Naive thymus-derived CD4-positive, alpha-beta T cell (primary cell): ENCODE measurements at regions of chr18 and their contacts with region 1.

Region 1: DNA sequence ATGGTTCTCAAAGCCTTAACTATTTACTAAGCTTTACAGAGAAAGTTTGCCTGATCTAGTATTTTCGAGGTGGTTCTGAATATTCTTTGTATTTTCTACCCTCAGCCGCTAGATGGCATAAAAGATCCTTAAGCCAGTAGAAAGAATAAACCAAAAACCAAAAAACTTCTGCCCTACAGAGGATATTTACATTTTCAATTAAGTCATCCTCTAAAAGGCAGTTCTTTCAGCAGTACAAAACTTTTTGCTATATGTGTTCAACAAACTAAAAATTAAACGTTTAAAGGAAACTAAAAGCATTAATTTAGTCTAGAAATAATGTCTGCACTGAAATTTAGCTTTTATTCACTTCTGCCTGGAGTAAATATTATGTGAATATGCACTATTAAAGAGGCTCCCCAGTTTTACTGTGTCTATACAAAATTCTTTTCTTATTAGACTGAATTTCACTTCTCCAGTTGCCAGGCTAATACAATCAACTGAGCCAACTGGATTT is 297.5 kb downstream of the PIEZO2 start:
- DNase-seq: peak in 5 of 9 donors; percentile 4 to 22 (median 11)
- ATAC-seq: no peak
- H3K4me3 ChIP-seq: no peak overlapping the region
- H3K4me3 Mint-ChIP-seq: no peak overlapping the region
- H3K27ac ChIP-seq: no peak overlapping the region
- H3K27ac Mint-ChIP-seq: no peak overlapping the region
- H3K4me1 ChIP-seq: no peaks in the 10 kb centered on the region
- H3K4me1 Mint-ChIP-seq: no peaks in the 10 kb centered on the region
- H3K27me3 ChIP-seq: no peaks in the 10 kb centered on the region
- H3K27me3 Mint-ChIP-seq: peaks cover 2 to 10% (median 8%) of the 10 kb centered on the region in 5 donors

Region 2: GRCh38 chr18:11040823-11041656 is 189.2 kb after region 1 on chr18:
- CTCF ChIA-PET with region 1: no interaction called
- POLR2A ChIA-PET with region 1: no interaction called
- intact Hi-C with region 1: loop called in 1 of 2 experiments (anchors 2 kb)
- DNase-seq: peak in 2 of 9 donors; percentile 5 to 8
- ATAC-seq: no peak
- H3K4me3 ChIP-seq: no peak overlapping the region
- H3K4me3 Mint-ChIP-seq: no peak overlapping the region
- H3K27ac ChIP-seq: no peak overlapping the region
- H3K27ac Mint-ChIP-seq: no peak overlapping the region
- H3K4me1 ChIP-seq: no peaks in the 10 kb centered on the region
- H3K4me1 Mint-ChIP-seq: no peaks in the 10 kb centered on the region
- H3K27me3 ChIP-seq: no peaks in the 10 kb centered on the region
- H3K27me3 Mint-ChIP-seq: peaks cover 5 to 15% (median 10%) of the 10 kb centered on the region in 5 donors

Region 3: GRCh38 chr18:11149441-11150270 is 297.8 kb after region 1 on chr18 and contains the start of gene PIEZO2:
- CTCF ChIA-PET with region 1: no interaction called
- POLR2A ChIA-PET with region 1: no interaction called
- intact Hi-C with region 1: loop called in 1 of 2 experiments (anchors 5 kb)
- DNase-seq: no peak
- ATAC-seq: peak; percentile 63
- H3K4me3 ChIP-seq: no peak within 1 kb of the TSS
- H3K4me3 Mint-ChIP-seq: peak within 1 kb of the TSS in 2 of 10 donors; percentile 15 to 36
- H3K27ac ChIP-seq: no peak within 1 kb of the TSS
- H3K27ac Mint-ChIP-seq: no peak within 1 kb of the TSS
- H3K4me1 ChIP-seq: no peaks in the 10 kb centered on the region
- H3K4me1 Mint-ChIP-seq: peaks cover 0 to 9% (median 5%) of the 10 kb centered on the region in 7 donors
- H3K27me3 ChIP-seq: no peaks in the 10 kb centered on the region
- H3K27me3 Mint-ChIP-seq: peaks cover 32 to 54% (median 42%) of the 10 kb centered on the region in 5 donors
- total RNA-seq, gene PIEZO2: not detected

Region 4: GRCh38 chr18:11553098-11553940 is 701.4 kb after region 1 on chr18:
- CTCF ChIA-PET with region 1: no interaction called
- POLR2A ChIA-PET with region 1: no interaction called
- intact Hi-C with region 1: loop called in 1 of 2 experiments (anchors 2 kb)
- DNase-seq: peak in 5 of 9 donors; percentile 7 to 34 (median 25)
- ATAC-seq: peak; percentile 68
- H3K4me3 ChIP-seq: no peak overlapping the region
- H3K4me3 Mint-ChIP-seq: no peak overlapping the region
- H3K27ac ChIP-seq: no peak overlapping the region
- H3K27ac Mint-ChIP-seq: no peak overlapping the region
- H3K4me1 ChIP-seq: no peaks in the 10 kb centered on the region
- H3K4me1 Mint-ChIP-seq: peaks cover 0 to 5% (median 0%) of the 10 kb centered on the region in 7 donors
- H3K27me3 ChIP-seq: peaks cover under 1 to 4% of the 10 kb centered on the region in 2 donors
- H3K27me3 Mint-ChIP-seq: peaks cover 0 to 17% (median 9%) of the 10 kb centered on the region in 5 donors

Region 5: DNA sequence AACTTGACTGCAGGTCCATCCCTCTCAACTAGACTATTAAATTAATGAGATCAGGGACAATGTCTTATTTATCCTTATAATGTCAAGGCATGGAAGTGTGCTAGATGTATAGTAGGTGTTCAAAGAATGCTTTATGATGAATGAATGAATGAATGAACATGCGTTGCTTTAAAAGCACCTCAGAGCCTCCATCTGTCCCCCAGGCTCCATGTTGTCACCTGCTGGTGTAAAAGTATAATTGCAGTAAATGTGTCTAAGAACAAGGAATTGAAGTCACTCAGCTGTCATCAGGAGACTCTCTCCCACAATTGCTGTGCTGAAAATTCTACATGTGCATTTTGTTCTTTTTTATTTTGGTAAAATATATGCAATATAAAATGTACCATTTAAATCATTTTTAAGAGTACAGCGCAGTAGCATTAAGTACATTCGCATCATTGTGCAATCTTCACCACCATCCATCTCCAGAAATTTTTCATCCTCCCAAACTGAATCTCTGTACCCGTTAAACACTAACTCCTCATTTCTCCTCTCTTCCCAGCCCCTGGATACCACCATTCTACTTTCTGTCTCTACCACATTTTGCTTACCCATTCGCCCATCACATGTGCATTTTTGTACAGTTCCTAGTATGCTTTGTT is 889.8 kb after region 1 on chr18:
- CTCF ChIA-PET with region 1: no interaction called
- POLR2A ChIA-PET with region 1: no interaction called
- intact Hi-C with region 1: loop called in 1 of 2 experiments (anchors 5 kb)
- DNase-seq: peak in 1 of 9 donors; percentile 12
- ATAC-seq: peak; percentile 49
- H3K4me3 ChIP-seq: no peak overlapping the region
- H3K4me3 Mint-ChIP-seq: no peak overlapping the region
- H3K27ac ChIP-seq: no peak overlapping the region
- H3K27ac Mint-ChIP-seq: no peak overlapping the region
- H3K4me1 ChIP-seq: no peaks in the 10 kb centered on the region
- H3K4me1 Mint-ChIP-seq: no peaks in the 10 kb centered on the region
- H3K27me3 ChIP-seq: no peaks in the 10 kb centered on the region
- H3K27me3 Mint-ChIP-seq: peaks cover 26 to 53% (median 30%) of the 10 kb centered on the region in 5 donors

Region 6: DNA sequence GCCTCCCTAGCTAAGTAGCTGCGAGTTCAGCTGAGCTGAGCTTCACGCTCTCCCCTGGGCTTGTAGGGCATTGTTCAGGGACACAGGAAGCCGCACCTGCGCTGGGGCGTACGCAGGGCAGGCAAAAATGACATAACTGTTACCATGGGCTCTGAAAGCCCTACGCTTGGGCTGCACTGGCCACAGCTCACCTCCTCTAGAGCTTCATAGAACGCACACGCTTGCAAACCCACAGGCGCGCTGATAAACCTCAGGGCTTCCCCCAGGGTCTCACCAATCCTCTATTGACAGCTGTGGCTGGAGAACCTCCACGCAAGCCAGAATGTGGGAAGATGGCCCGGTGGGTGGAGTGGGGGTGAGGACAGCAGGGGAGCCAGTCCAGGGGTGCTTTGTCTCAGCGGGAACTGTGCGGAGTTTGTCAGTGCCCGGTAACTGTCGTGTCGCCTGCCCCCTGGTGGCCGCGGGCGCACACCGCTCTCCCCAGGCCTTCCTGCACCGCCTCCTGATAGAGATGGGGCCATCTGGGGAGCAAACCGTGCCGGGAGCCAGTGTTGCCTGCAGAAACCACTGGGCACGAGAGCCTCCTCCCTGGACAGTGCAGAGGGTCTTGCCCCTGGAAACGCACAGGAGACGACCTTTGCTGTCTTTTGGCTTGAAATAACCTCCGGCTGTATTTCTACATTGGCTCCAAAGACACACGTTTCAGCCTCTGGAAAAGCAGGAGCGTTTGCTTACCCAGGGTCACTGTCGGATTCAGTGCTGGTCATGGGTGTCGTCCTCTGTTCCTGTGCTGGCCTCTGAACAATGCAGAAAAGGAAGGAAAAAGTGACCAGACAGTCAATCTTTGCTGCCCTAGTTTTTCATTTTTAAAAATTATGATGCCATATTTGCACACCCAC is 1385.3 kb after region 1 on chr18:
- CTCF ChIA-PET with region 1: no interaction called
- POLR2A ChIA-PET with region 1: no interaction called
- intact Hi-C with region 1: loop called in 1 of 2 experiments (anchors 5 kb)
- DNase-seq: peak in 7 of 9 donors; percentile 24 to 78 (median 49)
- ATAC-seq: peak; percentile 86
- H3K4me3 ChIP-seq: no peak overlapping the region
- H3K4me3 Mint-ChIP-seq: no peak overlapping the region
- H3K27ac ChIP-seq: no peak overlapping the region
- H3K27ac Mint-ChIP-seq: no peak overlapping the region
- H3K4me1 ChIP-seq: no peaks in the 10 kb centered on the region
- H3K4me1 Mint-ChIP-seq: peaks cover 0 to 5% (median 0%) of the 10 kb centered on the region in 7 donors
- H3K27me3 ChIP-seq: no peaks in the 10 kb centered on the region
- H3K27me3 Mint-ChIP-seq: peaks cover 16 to 42% (median 36%) of the 10 kb centered on the region in 5 donors